Activated T-helper 2 cell treated with anti-CD3 and anti-CD28 coated beads, Interferon-gamma antibody, Interleukin-2, Interleukin-4, amounts not matched to agents 10 μg/mL and 5 μg/mL and 100 μg/mL, durations not matched to agents 14 hours and 24 hours and 36 hours (primary cell): ENCODE measurements at regions of chr4 and their contacts with region 1.

Region 1: GRCh38 chr4:15778289-15779241 is at the start of gene CD38:
- DNase-seq: peak; percentile 65
- H3K4me3 Mint-ChIP-seq: peak within 1 kb of the TSS; percentile 93
- H3K27ac Mint-ChIP-seq: peak within 1 kb of the TSS; percentile 91
- H3K4me1 Mint-ChIP-seq: peaks cover 69% of the 10 kb centered on the region
- H3K27me3 Mint-ChIP-seq: no peaks in the 10 kb centered on the region
- total RNA-seq, gene CD38: 75.3 and 87.1 TPM in 2 replicates

Region 2: GRCh38 chr4:15231265-15232091 is 547.1 kb before region 1 on chr4:
- intact Hi-C with region 1: no loop called
- DNase-seq: peak; percentile 61
- H3K4me3 Mint-ChIP-seq: no peak overlapping the region
- H3K27ac Mint-ChIP-seq: no peak overlapping the region
- H3K4me1 Mint-ChIP-seq: peaks cover 30% of the 10 kb centered on the region
- H3K27me3 Mint-ChIP-seq: peaks cover 2% of the 10 kb centered on the region

Region 3: GRCh38 chr4:15738877-15739276 is 39.7 kb before region 1 on chr4:
- intact Hi-C with region 1: loop called (anchors 1 kb)
- DNase-seq: no peak
- H3K4me3 Mint-ChIP-seq: no peak overlapping the region
- H3K27ac Mint-ChIP-seq: peak overlapping the region; percentile 50
- H3K4me1 Mint-ChIP-seq: peaks cover 50% of the 10 kb centered on the region
- H3K27me3 Mint-ChIP-seq: no peaks in the 10 kb centered on the region

Region 4: DNA sequence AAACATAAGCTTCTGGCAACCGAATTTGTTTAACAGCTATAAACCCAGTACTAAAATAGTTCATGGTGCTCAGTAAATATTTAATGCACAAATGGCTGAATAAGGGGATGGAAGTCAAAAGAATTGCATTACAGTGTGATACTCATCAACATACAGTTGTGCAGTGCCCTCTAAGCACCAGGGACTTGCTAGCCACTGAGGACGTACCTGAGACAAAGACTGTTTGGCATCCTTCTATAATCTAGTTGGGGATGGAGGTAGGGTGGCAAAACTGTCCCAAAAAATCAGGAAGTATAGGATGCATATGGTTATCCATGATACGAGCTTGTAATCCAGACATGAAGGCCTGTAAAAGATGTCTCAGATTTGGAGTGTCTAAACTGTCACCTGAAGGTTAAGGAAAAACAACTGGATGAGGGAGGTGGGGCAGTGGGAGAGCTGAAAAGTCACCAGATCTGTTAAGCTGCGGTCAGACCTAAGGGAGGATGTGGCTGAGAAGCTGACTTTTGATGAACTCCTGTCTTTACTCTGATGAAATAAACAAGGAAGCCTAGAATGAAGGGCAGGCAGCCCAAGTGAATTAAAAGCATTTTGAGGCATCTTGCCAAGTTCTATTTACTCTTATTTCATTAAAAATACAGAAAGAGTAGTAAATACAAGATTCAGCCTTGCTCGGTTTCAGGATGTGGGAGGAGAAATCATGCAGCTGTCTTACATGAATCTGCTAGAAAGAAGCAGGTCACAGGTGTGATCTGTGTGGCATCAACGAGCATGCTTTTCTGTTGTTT is 12.5 kb before region 1 on chr4:
- intact Hi-C with region 1: loop called (anchors 1 kb)
- DNase-seq: peak; percentile 62
- H3K4me3 Mint-ChIP-seq: peak overlapping the region; percentile 13
- H3K27ac Mint-ChIP-seq: peak overlapping the region; percentile 83
- H3K4me1 Mint-ChIP-seq: peaks cover 69% of the 10 kb centered on the region
- H3K27me3 Mint-ChIP-seq: no peaks in the 10 kb centered on the region

Region 5: DNA sequence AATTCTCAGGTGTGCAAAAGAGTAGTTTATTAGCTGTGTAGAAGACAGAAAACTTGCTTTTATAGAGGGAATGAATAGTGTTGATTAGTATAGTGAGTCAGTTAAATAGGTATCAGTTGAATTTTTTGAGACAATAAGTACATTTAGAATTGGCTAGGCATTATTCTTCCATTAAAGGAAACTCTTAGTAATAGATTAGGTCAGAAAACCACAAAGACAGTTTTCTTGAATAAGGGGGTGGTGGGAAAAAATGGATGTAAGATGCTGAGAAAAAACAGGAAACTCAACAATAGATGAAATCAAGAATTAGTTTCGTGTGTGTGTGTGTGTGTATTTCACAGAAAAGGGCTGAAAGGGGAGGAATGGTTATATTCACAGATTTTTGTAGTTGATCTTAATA is 16.3 kb after region 1 on chr4:
- intact Hi-C with region 1: loop called (anchors 2 kb)
- DNase-seq: no peak
- H3K4me3 Mint-ChIP-seq: peak overlapping the region; percentile 39
- H3K27ac Mint-ChIP-seq: peak overlapping the region; percentile 89
- H3K4me1 Mint-ChIP-seq: peaks cover 61% of the 10 kb centered on the region
- H3K27me3 Mint-ChIP-seq: no peaks in the 10 kb centered on the region

Region 6: DNA sequence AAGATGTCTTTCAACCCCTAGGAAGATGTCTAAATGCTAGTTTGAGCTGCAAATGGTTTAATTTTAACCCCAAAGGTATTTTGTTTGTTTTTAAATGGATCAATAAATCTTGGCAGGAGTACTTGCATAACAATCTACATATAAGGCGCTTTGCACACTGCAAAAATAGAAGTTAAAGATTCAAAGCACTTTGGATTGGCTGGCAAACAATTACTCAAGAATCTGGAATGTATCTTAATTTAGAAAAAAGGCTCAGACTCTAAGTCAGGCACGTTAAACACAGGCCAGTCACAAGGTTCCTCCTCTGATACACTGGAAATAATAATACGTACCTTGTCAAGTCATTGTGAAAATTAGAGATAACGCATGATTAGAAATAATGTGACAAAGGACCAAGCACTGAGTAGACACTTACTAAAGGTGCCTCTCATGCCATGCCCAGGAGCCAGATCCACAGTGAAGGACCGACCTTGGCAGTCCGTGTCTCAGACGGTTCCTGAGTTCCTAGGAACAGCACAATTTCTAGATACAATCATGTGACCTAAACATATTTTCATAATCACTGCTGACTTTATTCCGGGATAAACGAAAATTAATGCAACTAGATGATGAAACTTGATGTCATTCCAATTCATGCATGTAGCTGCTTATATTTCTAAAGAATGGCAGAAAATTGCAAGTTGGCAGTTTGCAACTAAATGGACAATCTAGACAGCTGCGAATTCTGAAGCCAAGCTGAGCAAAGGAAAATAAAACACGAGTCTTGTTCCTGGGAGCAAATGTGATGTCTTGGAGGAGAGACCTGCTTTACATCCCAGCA is 255.7 kb after region 1 on chr4:
- intact Hi-C with region 1: no loop called
- DNase-seq: no peak
- H3K4me3 Mint-ChIP-seq: no peak overlapping the region
- H3K27ac Mint-ChIP-seq: no peak overlapping the region
- H3K4me1 Mint-ChIP-seq: no peaks in the 10 kb centered on the region
- H3K27me3 Mint-ChIP-seq: peaks cover 7% of the 10 kb centered on the region